ENCODE measurements at regions of chr16 and their contacts with region 1.

Region 1: DNA sequence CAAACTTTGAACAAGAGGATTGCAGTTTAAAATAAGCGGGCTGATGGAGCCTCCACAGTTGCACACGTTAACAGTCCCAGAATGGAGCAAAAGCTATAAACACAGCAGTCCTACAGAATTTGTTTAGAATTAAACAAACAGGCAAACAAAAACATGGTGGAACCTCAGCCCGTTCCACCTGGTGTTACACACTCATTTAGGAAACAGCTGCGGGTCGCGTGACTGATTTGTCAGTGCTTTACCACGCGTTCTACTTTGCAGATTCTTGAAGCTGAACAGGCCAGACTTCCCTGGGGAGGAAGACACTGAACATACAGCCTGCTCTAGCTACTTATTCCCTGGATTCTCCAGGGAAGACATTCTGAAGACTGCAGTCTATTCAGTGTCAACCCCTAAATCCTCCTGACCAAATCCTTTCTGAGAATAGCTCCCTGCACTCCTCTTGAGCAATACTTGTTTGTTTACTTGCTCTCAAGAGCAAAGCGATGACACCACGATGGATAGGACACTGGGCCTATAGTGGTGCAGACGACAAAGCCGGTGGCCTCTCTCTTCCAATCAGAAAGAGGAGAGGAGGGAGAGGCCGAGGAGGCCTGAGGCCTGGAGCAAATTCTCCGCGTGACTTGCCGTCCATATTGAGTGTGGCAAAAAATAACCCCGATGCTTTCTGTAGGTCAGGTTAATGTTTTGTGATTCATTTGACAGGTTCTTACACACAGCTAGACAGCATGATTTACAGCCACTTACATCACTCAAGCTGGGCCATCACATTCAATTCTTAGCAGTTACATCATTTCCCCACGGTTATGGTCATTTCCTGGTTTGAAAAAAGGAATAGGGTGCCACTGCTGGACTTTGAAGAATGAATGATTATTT is 4.0 kb upstream of the MAP1LC3B start:
- DNase-seq: peak; percentile 99
- H3K4me3 ChIP-seq: no peak overlapping the region
- H3K27ac ChIP-seq: peak overlapping the region; percentile 84
- H3K4me1 ChIP-seq: peaks cover 21% of the 10 kb centered on the region
- H3K27me3 ChIP-seq: no peaks in the 10 kb centered on the region
- CTCF ChIP-seq: no peak
- POLR2A ChIP-seq: peak; percentile 8

Region 2: DNA sequence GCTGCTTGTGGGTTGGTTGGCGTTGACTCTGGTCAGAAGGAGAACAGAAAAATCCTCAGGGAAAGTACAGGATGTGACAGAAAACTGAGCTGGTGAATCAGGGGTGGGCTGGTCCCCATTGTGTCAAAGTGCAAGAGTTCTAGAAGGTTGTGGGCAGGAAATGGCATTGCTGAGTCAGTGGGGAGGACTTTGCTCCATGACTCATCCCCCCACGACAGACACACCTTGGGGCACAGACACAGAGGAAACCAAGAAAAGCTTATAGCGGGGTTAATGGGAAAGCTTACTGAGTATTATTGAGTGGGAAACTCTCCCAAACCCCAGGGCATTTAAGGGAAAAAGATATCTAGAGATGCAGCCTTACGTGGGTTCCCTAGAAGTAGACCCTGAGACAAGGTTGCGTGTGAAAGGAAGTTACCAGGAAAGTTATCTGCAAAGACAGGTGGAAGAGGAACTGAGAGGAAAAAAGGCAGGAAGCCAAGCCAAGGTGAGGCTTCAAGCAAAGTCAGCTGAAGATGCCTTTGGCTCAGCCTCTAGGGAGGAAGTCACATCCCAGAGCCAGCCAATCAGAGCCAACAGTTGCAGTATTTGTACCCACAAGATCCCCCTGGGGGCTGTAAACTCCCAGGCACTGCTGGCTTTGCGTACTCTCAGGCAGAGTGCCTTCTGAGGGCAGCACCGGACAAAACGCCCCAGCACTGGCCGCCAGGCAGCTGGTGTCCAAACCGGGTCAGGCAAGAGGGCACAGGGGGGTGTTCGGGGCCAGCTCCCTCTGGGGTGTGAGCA is 723.5 kb before region 1 on chr16:
- CTCF ChIA-PET with region 1: no interaction called
- POLR2A ChIA-PET with region 1: no interaction called
- dilution Hi-C with region 1: no loop called
- intact Hi-C with region 1: loop called (anchors 10 kb)
- DNase-seq: peak; percentile 94
- H3K4me3 ChIP-seq: no peak overlapping the region
- H3K27ac ChIP-seq: peak overlapping the region; percentile 95
- H3K4me1 ChIP-seq: peaks cover 60% of the 10 kb centered on the region
- H3K27me3 ChIP-seq: no peaks in the 10 kb centered on the region
- CTCF ChIP-seq: no peak
- POLR2A ChIP-seq: no peak

Region 3: GRCh38 chr16:87324411-87325275 is 63.5 kb before region 1 on chr16:
- CTCF ChIA-PET with region 1: interaction called, 21 read pairs
- POLR2A ChIA-PET with region 1: no interaction called
- dilution Hi-C with region 1: no loop called
- intact Hi-C with region 1: loop called (anchors 1 kb)
- DNase-seq: peak; percentile 28
- H3K4me3 ChIP-seq: no peak overlapping the region
- H3K27ac ChIP-seq: no peak overlapping the region
- H3K4me1 ChIP-seq: no peaks in the 10 kb centered on the region
- H3K27me3 ChIP-seq: no peaks in the 10 kb centered on the region
- CTCF ChIP-seq: peak; percentile 63 to 87
- POLR2A ChIP-seq: no peak

Region 4: GRCh38 chr16:87407511-87408112 is 19.4 kb after region 1 on chr16:
- CTCF ChIA-PET with region 1: interaction called, 11 read pairs
- POLR2A ChIA-PET with region 1: interaction called, 4 read pairs
- dilution Hi-C with region 1: no loop called
- intact Hi-C with region 1: loop called (anchors 1 kb)
- DNase-seq: peak; percentile 95
- H3K4me3 ChIP-seq: peak overlapping the region in 1 of 3 experiments; percentile 39
- H3K27ac ChIP-seq: peak overlapping the region; percentile 82
- H3K4me1 ChIP-seq: peaks cover 20% of the 10 kb centered on the region
- H3K27me3 ChIP-seq: no peaks in the 10 kb centered on the region
- CTCF ChIP-seq: no peak
- POLR2A ChIP-seq: peak; percentile 28

Region 5: DNA sequence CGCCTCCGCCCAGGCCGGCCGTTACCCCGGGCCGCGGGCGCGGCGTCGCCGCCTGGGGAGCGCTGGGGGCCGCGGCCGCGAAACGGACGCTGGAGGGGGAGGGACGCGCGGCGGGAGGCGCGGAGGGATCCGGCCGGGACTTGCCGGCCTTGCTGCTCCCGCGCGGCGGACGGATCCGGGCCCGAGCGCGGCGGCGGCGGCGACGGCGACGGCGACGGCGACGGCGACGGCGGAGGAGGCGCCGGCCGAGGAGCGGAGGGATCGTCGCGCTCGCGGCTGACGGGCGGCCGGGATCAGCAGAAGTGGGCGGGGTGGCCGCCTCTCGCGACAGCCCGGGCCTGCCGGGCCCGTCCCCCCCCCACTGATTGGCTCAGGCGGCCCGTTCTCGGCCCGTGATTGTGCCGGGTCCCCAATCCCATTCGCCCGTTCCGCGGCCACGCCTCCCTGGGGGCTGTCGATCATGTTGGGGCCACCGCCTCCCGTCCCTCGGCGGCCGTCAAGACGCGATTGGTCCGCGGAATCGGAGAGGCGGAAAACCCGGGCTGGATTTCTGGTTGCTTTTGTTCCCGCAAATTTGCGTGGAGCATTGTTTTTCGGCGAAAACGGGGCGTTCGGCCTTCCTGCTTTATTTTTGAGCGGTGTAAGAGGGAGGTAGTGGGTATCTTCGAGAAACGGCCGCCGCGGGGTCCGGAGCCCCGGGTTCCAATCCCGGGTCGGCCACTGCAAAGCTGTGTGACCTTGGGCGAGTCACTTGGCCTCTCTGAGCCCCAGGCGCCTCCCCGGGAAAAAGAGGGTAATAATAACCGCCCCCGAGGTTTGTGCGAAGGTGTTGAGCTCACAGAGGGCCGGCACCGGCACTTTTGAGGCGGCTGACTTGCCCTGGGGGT is 104.8 kb after region 1 on chr16 and contains the start of gene ZCCHC14:
- CTCF ChIA-PET with region 1: no interaction called
- POLR2A ChIA-PET with region 1: no interaction called
- dilution Hi-C with region 1: no loop called
- intact Hi-C with region 1: loop called (anchors 2 kb)
- DNase-seq: peak; percentile 99
- H3K4me3 ChIP-seq: peak within 1 kb of the TSS in 2 of 3 experiments; percentile 47 to 56
- H3K27ac ChIP-seq: peak within 1 kb of the TSS; percentile 68
- H3K4me1 ChIP-seq: peaks cover 23% of the 10 kb centered on the region
- H3K27me3 ChIP-seq: no peaks in the 10 kb centered on the region
- CTCF ChIP-seq: no peak
- POLR2A ChIP-seq: peak; percentile 73
- total RNA-seq, gene ZCCHC14: 30.9 and 34.0 TPM in 2 replicates

Measured in endothelial cell of umbilical vein (primary cell).